Right ventricle myocardium superior (tissue), 1 donor: ENCODE measurements at regions of chr6 and their contacts with region 1.

Region 1: GRCh38 chr6:10800829-10801535 is 37.4 kb downstream of the MAK start:
- DNase-seq: peak; percentile 67
- ATAC-seq: peak; percentile 89

Region 2: GRCh38 chr6:10478187-10479040 is 322.6 kb before region 1 on chr6:
- intact Hi-C with region 1: loop called (anchors 2 kb)
- DNase-seq: no peak
- ATAC-seq: peak; percentile 46